Activated B cell treated with CpG ODN at 0.5 μM for 24 hours (primary cell): ENCODE measurements at regions of chr6 and their contacts with region 1.

Region 1: DNA sequence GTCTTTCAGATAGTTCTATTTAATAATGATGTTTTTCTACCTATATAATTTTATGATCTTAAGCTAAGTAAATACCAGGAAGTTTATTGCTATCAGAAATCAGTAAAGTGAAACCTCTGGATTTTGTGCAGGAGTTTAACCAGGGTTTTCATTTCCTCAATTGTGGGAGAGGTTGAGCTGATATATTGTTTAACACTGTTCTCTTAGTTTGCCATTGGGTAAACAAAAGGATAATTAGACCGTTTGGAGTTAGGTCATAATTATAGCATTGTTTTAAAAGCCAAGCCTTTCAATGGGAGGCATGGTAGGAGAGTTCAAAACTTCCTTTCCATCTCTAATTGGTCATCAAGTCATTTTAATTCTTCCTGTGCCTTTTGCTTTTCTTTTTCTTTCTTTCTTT is 58.7 kb downstream of the STXBP5 start:
- DNase-seq: no peak
- ATAC-seq: no peak
- H3K4me3 Mint-ChIP-seq: no peak overlapping the region
- H3K27ac Mint-ChIP-seq: no peak overlapping the region
- H3K4me1 Mint-ChIP-seq: no peaks in the 10 kb centered on the region
- H3K27me3 Mint-ChIP-seq: no peaks in the 10 kb centered on the region
- CTCF ChIP-seq: no peak

Region 2: GRCh38 chr6:146594495-146594894 is 668.5 kb before region 1 on chr6:
- CTCF ChIA-PET with region 1: no interaction called
- POLR2A ChIA-PET with region 1: no interaction called
- intact Hi-C with region 1: no loop called
- DNase-seq: no peak
- ATAC-seq: no peak
- H3K4me3 Mint-ChIP-seq: no peak overlapping the region
- H3K27ac Mint-ChIP-seq: no peak overlapping the region
- H3K4me1 Mint-ChIP-seq: peaks cover 3% of the 10 kb centered on the region
- H3K27me3 Mint-ChIP-seq: peaks cover 4% of the 10 kb centered on the region
- CTCF ChIP-seq: no peak

Region 3: DNA sequence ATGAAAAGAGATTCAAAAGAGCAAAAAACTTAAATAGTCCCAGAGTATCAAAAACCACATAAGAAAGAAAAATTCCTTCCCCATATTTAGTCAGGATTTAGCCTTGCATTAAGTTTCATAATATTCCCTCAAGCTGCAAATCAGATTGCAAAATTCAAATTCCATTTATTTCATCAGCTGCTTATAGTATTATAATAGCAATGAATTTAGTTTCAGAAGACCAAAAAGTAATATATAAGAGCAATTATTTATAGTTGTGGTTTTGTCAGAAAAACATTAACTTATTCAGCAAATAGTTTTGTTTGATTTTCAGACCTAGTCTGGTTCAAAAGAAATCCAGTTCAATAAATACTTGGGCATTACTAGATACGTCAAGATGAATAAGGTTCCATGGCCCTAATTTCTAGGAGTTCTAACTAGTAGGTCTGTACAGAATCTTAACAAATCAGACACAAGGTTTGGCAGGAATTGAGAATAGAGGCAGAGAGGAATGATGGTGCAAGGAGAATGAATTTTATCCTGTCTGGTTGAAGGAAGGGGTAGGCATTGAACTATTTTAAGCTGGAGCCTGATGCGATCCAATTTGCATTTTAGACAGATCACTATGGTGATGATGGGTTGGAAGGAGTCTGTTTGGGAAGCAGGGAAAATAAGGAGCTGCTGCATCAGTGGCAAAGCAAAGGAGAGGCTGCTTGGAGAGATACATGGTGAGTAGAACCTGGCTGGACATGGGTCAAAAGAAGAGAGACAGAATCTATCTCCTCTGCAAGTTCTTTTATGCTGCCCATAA is 222.6 kb before region 1 on chr6:
- CTCF ChIA-PET with region 1: no interaction called
- POLR2A ChIA-PET with region 1: no interaction called
- intact Hi-C with region 1: no loop called
- DNase-seq: no peak
- ATAC-seq: no peak
- H3K4me3 Mint-ChIP-seq: no peak overlapping the region
- H3K27ac Mint-ChIP-seq: no peak overlapping the region
- H3K4me1 Mint-ChIP-seq: no peaks in the 10 kb centered on the region
- H3K27me3 Mint-ChIP-seq: no peaks in the 10 kb centered on the region
- CTCF ChIP-seq: no peak

Region 4: DNA sequence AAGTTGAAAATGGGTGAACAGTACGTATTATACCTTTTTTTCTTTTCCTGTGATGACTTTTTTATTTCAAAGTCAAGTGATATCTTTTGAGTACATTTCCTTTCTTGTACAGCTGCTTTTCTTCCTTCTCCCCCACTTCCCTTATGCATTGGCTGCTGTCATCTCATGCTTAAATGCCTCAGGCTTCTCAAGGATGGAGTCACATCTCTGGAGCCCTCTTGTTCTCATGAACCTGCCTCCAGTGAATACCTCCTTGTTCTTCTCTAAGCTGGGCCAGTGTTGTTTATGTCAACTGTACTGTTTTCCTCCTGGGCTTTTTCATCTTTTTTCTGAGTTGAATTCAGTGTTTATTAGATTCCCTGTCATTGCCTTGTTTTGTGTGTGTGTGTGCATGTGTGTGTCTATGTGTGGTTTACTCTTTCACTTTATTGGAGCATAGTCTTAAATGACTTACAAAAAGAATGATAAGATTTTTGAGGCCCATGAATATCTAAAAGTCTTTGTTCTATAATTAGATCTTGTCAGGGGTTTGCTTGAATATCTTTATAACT is 35.1 kb before region 1 on chr6:
- CTCF ChIA-PET with region 1: no interaction called
- POLR2A ChIA-PET with region 1: no interaction called
- intact Hi-C with region 1: loop called (anchors 5 kb)
- DNase-seq: no peak
- ATAC-seq: no peak
- H3K4me3 Mint-ChIP-seq: no peak overlapping the region
- H3K27ac Mint-ChIP-seq: no peak overlapping the region
- H3K4me1 Mint-ChIP-seq: peaks cover 12% of the 10 kb centered on the region
- H3K27me3 Mint-ChIP-seq: no peaks in the 10 kb centered on the region
- CTCF ChIP-seq: no peak

Region 5: GRCh38 chr6:147238164-147238563 is 24.8 kb before region 1 on chr6:
- CTCF ChIA-PET with region 1: no interaction called
- POLR2A ChIA-PET with region 1: no interaction called
- intact Hi-C with region 1: no loop called
- DNase-seq: no peak
- ATAC-seq: no peak
- H3K4me3 Mint-ChIP-seq: no peak overlapping the region
- H3K27ac Mint-ChIP-seq: no peak overlapping the region
- H3K4me1 Mint-ChIP-seq: no peaks in the 10 kb centered on the region
- H3K27me3 Mint-ChIP-seq: no peaks in the 10 kb centered on the region
- CTCF ChIP-seq: no peak

Region 6: GRCh38 chr6:147285087-147285855 is 22.3 kb after region 1 on chr6:
- CTCF ChIA-PET with region 1: no interaction called
- POLR2A ChIA-PET with region 1: no interaction called
- intact Hi-C with region 1: loop called (anchors 1 kb)
- DNase-seq: no peak
- ATAC-seq: no peak
- H3K4me3 Mint-ChIP-seq: no peak overlapping the region
- H3K27ac Mint-ChIP-seq: peak overlapping the region; percentile 1
- H3K4me1 Mint-ChIP-seq: peaks cover 13% of the 10 kb centered on the region
- H3K27me3 Mint-ChIP-seq: no peaks in the 10 kb centered on the region
- CTCF ChIP-seq: no peak

Region 7: GRCh38 chr6:147479857-147480256 is 216.9 kb after region 1 on chr6:
- CTCF ChIA-PET with region 1: no interaction called
- POLR2A ChIA-PET with region 1: no interaction called
- intact Hi-C with region 1: no loop called
- DNase-seq: no peak
- ATAC-seq: no peak
- H3K4me3 Mint-ChIP-seq: no peak overlapping the region
- H3K27ac Mint-ChIP-seq: no peak overlapping the region
- H3K4me1 Mint-ChIP-seq: no peaks in the 10 kb centered on the region
- H3K27me3 Mint-ChIP-seq: no peaks in the 10 kb centered on the region
- CTCF ChIP-seq: no peak